Ascending aorta (tissue), 2 donors: ENCODE measurements at regions of chr2 and their contacts with region 1.

Region 1: GRCh38 chr2:210476194-210477128 is at the start of gene LANCL1:
- DNase-seq: peak; percentile 70 to 95
- H3K4me3 ChIP-seq: peak within 1 kb of the TSS; percentile 74 to 87
- H3K27ac ChIP-seq: peak within 1 kb of the TSS; percentile 76 to 77
- H3K4me1 ChIP-seq: peaks cover 0 to 2% of the 10 kb centered on the region in 2 donors
- H3K27me3 ChIP-seq: no peaks in the 10 kb centered on the region
- CTCF ChIP-seq: peak in 1 of 3 experiments; percentile 4
- total RNA-seq, gene LANCL1: 16.4 TPM

Region 2: DNA sequence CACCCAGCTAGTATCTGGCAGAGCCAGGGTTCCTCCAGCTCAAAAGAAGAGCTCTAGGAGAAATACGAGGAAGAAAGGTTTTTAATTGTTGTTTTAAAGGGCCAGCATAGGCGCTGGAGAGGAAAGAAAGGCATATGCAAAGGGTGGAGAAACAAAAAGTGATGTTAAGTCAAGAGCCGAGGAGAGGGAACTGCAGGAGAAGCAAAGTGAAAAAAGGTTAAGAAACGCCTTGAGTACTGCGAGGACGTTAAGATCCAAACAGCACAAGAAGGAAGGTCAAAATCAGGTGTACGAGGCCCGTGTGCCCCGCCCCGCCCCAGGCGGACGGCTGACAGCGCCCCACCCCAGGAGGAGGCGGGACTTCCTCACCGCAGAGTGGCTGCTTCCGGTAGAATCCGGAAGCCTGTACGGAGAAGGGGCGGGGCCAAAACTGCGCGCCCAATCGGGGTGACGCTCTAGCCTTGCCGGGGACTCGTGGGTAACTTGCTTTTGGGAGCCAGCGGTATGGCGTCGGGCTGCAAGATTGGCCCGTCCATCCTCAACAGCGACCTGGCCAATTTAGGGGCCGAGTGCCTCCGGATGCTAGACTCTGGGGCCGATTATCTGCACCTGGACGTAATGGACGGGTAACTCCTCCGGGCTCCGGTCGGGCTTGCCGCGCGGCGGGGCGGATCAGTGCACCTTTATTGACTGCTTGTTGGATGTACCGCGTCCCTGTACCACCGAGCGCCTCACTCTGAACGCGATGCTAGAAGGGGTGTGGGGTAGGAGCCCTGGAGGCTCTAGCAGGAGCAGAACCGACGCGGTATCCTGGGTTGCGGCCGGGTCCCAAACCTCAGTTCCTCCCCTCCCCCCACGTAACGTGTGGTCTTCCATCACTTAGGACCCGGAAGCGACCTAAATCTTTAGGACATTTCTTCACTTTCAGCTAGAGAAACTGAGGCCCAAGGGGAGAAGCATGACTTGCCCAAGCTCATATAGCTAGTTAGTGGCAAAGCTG is 474.0 kb before region 1 on chr2 and contains the start of gene RPE:
- intact Hi-C with region 1: loop called (anchors 2 kb)
- DNase-seq: peak; percentile 81 to 97
- H3K4me3 ChIP-seq: peak within 1 kb of the TSS; percentile 87 to 91
- H3K27ac ChIP-seq: peak within 1 kb of the TSS; percentile 66 to 67
- H3K4me1 ChIP-seq: peaks cover 0 to 29% of the 10 kb centered on the region in 2 donors
- H3K27me3 ChIP-seq: no peaks in the 10 kb centered on the region
- CTCF ChIP-seq: no peak
- total RNA-seq, gene RPE: 45.0 TPM

Region 3: GRCh38 chr2:210233487-210233886 is 243.0 kb before region 1 on chr2:
- intact Hi-C with region 1: loop called (anchors 5 kb)
- DNase-seq: peak; percentile 21 to 91
- H3K4me3 ChIP-seq: no peak overlapping the region
- H3K27ac ChIP-seq: peak overlapping the region; percentile 56 to 74
- H3K4me1 ChIP-seq: peaks cover 0 to 16% of the 10 kb centered on the region in 2 donors
- H3K27me3 ChIP-seq: no peaks in the 10 kb centered on the region
- CTCF ChIP-seq: peak; percentile 36 to 42 (median 41)